ENCODE measurements at regions of chr20 and their contacts with region 1.

Region 1: DNA sequence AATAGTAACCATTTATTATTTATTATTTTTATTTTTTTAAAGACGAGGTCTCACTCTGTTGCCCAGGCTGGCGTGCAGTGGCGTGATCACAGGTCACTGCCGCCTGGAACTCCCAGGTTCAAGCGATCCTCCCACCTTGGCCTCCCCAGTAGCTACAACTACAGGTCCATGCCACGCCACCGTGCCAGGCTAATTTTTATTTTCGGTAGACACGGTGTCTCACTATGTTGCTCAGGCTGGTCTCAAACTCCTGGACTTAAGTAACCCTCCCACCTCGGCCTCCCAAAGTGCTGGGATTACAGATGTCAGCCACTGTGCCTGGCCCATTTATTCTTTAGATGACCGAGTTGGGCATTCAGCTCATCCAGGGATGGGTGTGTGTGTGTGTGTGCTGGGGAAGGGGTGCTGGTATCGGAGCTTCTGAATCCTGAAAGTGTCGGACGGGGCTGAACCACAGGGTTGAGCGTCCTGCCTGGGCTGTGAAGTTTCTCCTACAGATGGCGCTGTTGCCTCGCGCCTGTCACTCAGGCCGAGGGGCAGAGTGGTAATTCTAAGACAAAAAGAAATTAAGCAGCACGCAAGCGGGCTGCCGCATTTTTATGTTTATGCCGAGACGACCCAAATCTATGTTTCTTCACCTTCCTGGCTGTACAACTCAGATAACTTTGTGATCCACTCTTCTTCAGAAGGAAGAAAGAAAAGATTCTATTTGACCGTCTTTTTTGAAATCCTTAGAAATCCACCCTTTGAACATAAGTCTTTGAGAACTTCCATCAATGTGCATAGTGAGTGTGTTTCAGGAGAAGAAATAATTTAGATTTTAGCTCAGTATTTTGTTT is 252.8 kb downstream of the CDH26 start:
- DNase-seq: peak; percentile 57
- H3K4me3 Mint-ChIP-seq: no peak overlapping the region
- H3K27ac Mint-ChIP-seq: no peak overlapping the region
- H3K4me1 Mint-ChIP-seq: no peaks in the 10 kb centered on the region
- H3K27me3 Mint-ChIP-seq: peaks cover 33% of the 10 kb centered on the region
- CTCF ChIP-seq: peak; percentile 91

Region 2: DNA sequence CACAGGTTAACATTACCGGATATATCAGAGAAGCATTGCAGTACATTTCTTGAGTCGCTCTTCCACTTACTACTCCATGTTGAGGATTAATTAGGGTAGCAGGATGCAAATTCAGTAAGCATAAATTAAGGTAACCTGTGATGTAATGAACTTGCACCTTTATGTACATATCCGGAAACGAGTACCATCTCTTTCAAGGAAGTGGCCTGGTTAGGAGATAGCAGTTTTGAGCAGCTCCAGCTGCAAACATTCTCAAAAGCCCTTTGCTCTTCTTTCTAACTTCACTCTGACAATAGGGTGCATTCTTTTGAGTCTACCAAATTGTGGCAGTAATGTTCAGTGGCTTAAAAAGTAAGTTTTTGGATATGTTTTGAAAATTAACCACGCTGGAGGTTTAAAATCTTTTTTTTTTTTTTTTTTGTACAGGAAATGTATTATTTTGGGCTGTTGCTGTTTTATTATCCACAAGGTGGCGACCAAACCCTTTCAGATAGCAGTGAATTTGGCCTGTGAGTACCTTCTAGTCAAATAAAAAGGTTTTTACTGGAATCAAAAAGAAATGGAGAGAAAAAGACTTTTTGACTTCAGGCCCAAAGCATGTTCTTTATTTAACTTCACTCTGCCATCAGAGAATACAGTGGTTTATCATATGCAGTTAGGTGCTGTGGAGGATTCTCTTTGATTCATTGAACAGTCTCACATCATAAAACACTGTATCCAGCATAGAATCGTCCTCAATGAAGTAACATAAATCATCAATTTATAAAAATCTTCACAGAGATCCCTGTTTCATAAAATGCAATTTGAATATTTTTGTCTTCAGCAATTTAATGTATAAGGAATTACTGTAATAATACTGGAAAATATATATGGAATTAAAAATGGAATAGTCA is 261.9 kb before region 1 on chr20:
- CTCF ChIA-PET with region 1: interaction called, 7 read pairs
- POLR2A ChIA-PET with region 1: no interaction called
- intact Hi-C with region 1: loop called (anchors 5 kb)
- DNase-seq: peak; percentile 71
- H3K4me3 Mint-ChIP-seq: no peak overlapping the region
- H3K27ac Mint-ChIP-seq: no peak overlapping the region
- H3K4me1 Mint-ChIP-seq: no peaks in the 10 kb centered on the region
- H3K27me3 Mint-ChIP-seq: no peaks in the 10 kb centered on the region
- CTCF ChIP-seq: peak; percentile 23

Region 3: GRCh38 chr20:60192326-60192725 is 18.7 kb before region 1 on chr20:
- CTCF ChIA-PET with region 1: interaction called, 67 read pairs
- POLR2A ChIA-PET with region 1: interaction called, 3 read pairs
- intact Hi-C with region 1: no loop called
- DNase-seq: no peak
- H3K4me3 Mint-ChIP-seq: no peak overlapping the region
- H3K27ac Mint-ChIP-seq: no peak overlapping the region
- H3K4me1 Mint-ChIP-seq: no peaks in the 10 kb centered on the region
- H3K27me3 Mint-ChIP-seq: peaks cover 41% of the 10 kb centered on the region
- CTCF ChIP-seq: no peak

Region 4: GRCh38 chr20:60255866-60256265 is 44.9 kb after region 1 on chr20:
- CTCF ChIA-PET with region 1: interaction called, 108 read pairs
- POLR2A ChIA-PET with region 1: no interaction called
- intact Hi-C with region 1: no loop called
- DNase-seq: no peak
- H3K4me3 Mint-ChIP-seq: no peak overlapping the region
- H3K27ac Mint-ChIP-seq: no peak overlapping the region
- H3K4me1 Mint-ChIP-seq: peaks cover 9% of the 10 kb centered on the region
- H3K27me3 Mint-ChIP-seq: peaks cover 42% of the 10 kb centered on the region
- CTCF ChIP-seq: no peak

Region 5: GRCh38 chr20:61120595-61121515 is 909.9 kb after region 1 on chr20:
- CTCF ChIA-PET with region 1: interaction called, 15 read pairs
- POLR2A ChIA-PET with region 1: interaction called, 3 read pairs
- intact Hi-C with region 1: loop called (anchors 1 kb)
- DNase-seq: peak; percentile 83
- H3K4me3 Mint-ChIP-seq: no peak overlapping the region
- H3K27ac Mint-ChIP-seq: no peak overlapping the region
- H3K4me1 Mint-ChIP-seq: peaks cover 6% of the 10 kb centered on the region
- H3K27me3 Mint-ChIP-seq: peaks cover 41% of the 10 kb centered on the region
- CTCF ChIP-seq: peak; percentile 61

Region 6: GRCh38 chr20:61263084-61263695 is 1052.2 kb after region 1 on chr20:
- CTCF ChIA-PET with region 1: interaction called, 12 read pairs
- POLR2A ChIA-PET with region 1: no interaction called
- intact Hi-C with region 1: no loop called
- DNase-seq: peak; percentile 18
- H3K4me3 Mint-ChIP-seq: no peak overlapping the region
- H3K27ac Mint-ChIP-seq: no peak overlapping the region
- H3K4me1 Mint-ChIP-seq: no peaks in the 10 kb centered on the region
- H3K27me3 Mint-ChIP-seq: no peaks in the 10 kb centered on the region
- CTCF ChIP-seq: peak; percentile 78